ENCODE measurements at regions of chr1 and their contacts with region 1.

Region 1: GRCh38 chr1:154335025-154335714 is 9.8 kb downstream of the ATP8B2 start:
- DNase-seq: peak; percentile 69 to 88
- H3K4me3 ChIP-seq: no peak overlapping the region
- H3K4me1 ChIP-seq: no peaks in the 10 kb centered on the region
- H3K27me3 ChIP-seq: no peaks in the 10 kb centered on the region

Region 2: GRCh38 chr1:154183045-154183915 is 151.9 kb before region 1 on chr1:
- in situ Hi-C with region 1: loop called (anchors 10 kb)
- DNase-seq: peak; percentile 98 to 99
- H3K4me3 ChIP-seq: peak overlapping the region; percentile 98
- H3K4me1 ChIP-seq: peaks cover 60% of the 10 kb centered on the region
- H3K27me3 ChIP-seq: no peaks in the 10 kb centered on the region

Measured in HAP-1 (cell line).